ENCODE measurements at regions of chr4 and their contacts with region 1.

Region 1: DNA sequence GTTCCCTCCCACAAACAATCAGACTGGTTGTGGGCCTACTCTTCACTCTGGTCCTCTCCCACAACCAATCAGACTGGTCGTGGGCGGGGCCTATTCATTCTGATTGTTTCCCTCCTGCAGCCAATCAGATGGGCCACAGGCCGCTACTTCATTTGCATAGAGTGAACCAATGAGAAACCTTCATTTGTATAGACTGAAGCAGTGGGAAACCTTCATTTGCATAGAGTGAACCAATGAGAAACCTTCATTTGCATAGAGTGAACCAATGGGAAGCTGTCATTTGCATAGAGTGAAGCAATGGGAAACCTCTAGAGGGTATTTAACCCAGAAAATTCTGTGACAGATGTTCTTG is 55.2 kb downstream of the TRMT44 start:
- DNase-seq: no peak
- ATAC-seq: no peak
- H3K4me3 ChIP-seq: no peak overlapping the region
- H3K27ac ChIP-seq: no peak overlapping the region
- H3K4me1 ChIP-seq: no peaks in the 10 kb centered on the region
- H3K27me3 ChIP-seq: no peaks in the 10 kb centered on the region

Region 2: DNA sequence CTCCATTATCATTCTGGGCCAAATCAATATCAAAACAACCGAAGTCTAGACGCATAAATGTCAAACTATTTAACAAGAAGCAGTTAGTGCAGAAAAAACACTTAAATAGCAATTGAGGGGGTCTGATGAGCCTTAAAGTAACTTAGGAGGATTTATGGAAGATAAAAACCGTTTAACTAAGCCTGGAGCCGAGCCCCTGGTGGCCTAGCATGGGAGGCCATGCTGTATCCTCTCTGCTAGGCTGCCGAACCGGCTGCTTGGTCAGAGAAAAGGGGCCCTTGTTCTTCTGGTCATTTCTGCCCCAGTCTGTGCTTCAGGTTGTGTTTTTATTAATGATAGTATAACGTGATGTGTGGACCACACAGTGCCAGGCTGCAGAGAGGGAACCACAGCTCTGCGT is 169.1 kb after region 1 on chr4:
- intact Hi-C with region 1: loop called in 1 of 2 experiments (anchors 5 kb)
- DNase-seq: no peak
- ATAC-seq: no peak
- H3K4me3 ChIP-seq: no peak overlapping the region
- H3K27ac ChIP-seq: no peak overlapping the region
- H3K4me1 ChIP-seq: no peaks in the 10 kb centered on the region
- H3K27me3 ChIP-seq: peaks cover 0 to 3% of the 10 kb centered on the region in 2 donors

Measured in aorta (tissue), 5 donors.